ENCODE measurements at regions of chr17 and their contacts with region 1.

Region 1: GRCh38 chr17:73429440-73430164 is 117.8 kb upstream of the CDC42EP4 start:
- DNase-seq: peak; percentile 97
- H3K4me3 ChIP-seq: no peak overlapping the region
- H3K27ac ChIP-seq: no peak overlapping the region
- H3K4me1 ChIP-seq: peaks cover 3 to 25% (median 14%) of the 10 kb centered on the region in 6 donors
- H3K27me3 ChIP-seq: no peaks in the 10 kb centered on the region
- CTCF ChIP-seq: peak; percentile 78 to 98 (median 94)
- POLR2A ChIP-seq: no peak

Region 2: GRCh38 chr17:73492821-73493814 is 63.5 kb after region 1 on chr17:
- intact Hi-C with region 1: no loop called
- DNase-seq: peak; percentile 54
- H3K4me3 ChIP-seq: no peak overlapping the region
- H3K27ac ChIP-seq: no peak overlapping the region
- H3K4me1 ChIP-seq: peaks cover 0 to 8% (median 0%) of the 10 kb centered on the region in 6 donors
- H3K27me3 ChIP-seq: no peaks in the 10 kb centered on the region
- CTCF ChIP-seq: no peak
- POLR2A ChIP-seq: no peak

Region 3: GRCh38 chr17:73566905-73567782 is 137.5 kb after region 1 on chr17:
- intact Hi-C with region 1: no loop called
- DNase-seq: peak; percentile 88
- H3K4me3 ChIP-seq: no peak overlapping the region
- H3K27ac ChIP-seq: peak overlapping the region; percentile 30 to 84 (median 77)
- H3K4me1 ChIP-seq: peaks cover 0 to 16% (median 11%) of the 10 kb centered on the region in 6 donors
- H3K27me3 ChIP-seq: no peaks in the 10 kb centered on the region
- CTCF ChIP-seq: peak in 2 of 11 experiments; percentile 13 to 23
- POLR2A ChIP-seq: no peak

Region 4: GRCh38 chr17:73710095-73710592 is 280.5 kb after region 1 on chr17:
- intact Hi-C with region 1: loop called (anchors 2 kb)
- DNase-seq: no peak
- H3K4me3 ChIP-seq: no peak overlapping the region
- H3K27ac ChIP-seq: no peak overlapping the region
- H3K4me1 ChIP-seq: peaks cover 15 to 30% (median 19%) of the 10 kb centered on the region in 6 donors
- H3K27me3 ChIP-seq: peaks cover 0 to 31% (median 0%) of the 10 kb centered on the region in 7 donors
- CTCF ChIP-seq: peak; percentile 62 to 90 (median 84)
- POLR2A ChIP-seq: no peak

Region 5: GRCh38 chr17:73956669-73957465 is 527.3 kb after region 1 on chr17:
- intact Hi-C with region 1: loop called (anchors 5 kb)
- DNase-seq: peak; percentile 82
- H3K4me3 ChIP-seq: no peak overlapping the region
- H3K27ac ChIP-seq: no peak overlapping the region
- H3K4me1 ChIP-seq: peaks cover 6 to 13% (median 10%) of the 10 kb centered on the region in 6 donors
- H3K27me3 ChIP-seq: peaks cover 0 to 26% (median 9%) of the 10 kb centered on the region in 7 donors
- CTCF ChIP-seq: peak in 10 of 11 experiments; percentile 12 to 74 (median 54)
- POLR2A ChIP-seq: no peak

Region 6: DNA sequence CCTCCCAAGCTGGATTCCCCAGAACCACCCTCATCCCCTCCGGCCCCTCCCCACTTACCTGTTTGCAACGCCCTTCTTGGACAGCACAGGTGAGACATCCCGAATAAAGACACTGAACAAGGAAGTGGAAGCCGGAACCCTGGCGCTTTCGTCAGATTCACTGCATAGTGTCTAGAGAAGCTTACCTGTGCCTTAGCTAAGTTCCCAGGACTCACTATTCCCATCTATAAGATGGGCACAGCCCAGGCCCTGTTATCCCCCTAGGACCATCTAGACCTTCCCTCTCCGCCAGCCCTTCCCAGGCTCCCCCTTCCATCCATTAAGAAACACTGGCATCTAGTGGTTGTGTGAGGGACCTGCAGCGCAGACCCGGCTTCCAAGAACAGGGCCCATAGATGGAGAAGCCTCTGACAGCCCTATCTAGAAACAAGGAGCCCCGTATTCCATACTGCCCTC is 747.0 kb after region 1 on chr17:
- intact Hi-C with region 1: loop called (anchors 5 kb)
- DNase-seq: peak; percentile 71
- H3K4me3 ChIP-seq: no peak overlapping the region
- H3K27ac ChIP-seq: no peak overlapping the region
- H3K4me1 ChIP-seq: no peaks in the 10 kb centered on the region
- H3K27me3 ChIP-seq: peaks cover 0 to 61% (median 4%) of the 10 kb centered on the region in 7 donors
- CTCF ChIP-seq: peak; percentile 52 to 86 (median 79)
- POLR2A ChIP-seq: no peak

Measured in spleen (tissue), 13 donors.